Activated naive CD4-positive, alpha-beta T cell treated with anti-CD3 and anti-CD28 coated beads for 36 hours (primary cell): ENCODE measurements at regions of chr1 and their contacts with region 1.

Region 1: GRCh38 chr1:194150242-194150641 is 963.8 kb upstream of the B3GALT2 start:
- DNase-seq: no peak
- H3K4me3 Mint-ChIP-seq: no peak overlapping the region
- H3K27ac Mint-ChIP-seq: no peak overlapping the region
- H3K4me1 Mint-ChIP-seq: peaks cover 13% of the 10 kb centered on the region
- H3K27me3 Mint-ChIP-seq: no peaks in the 10 kb centered on the region

Region 2: GRCh38 chr1:193927550-193927949 is 222.7 kb before region 1 on chr1:
- CTCF ChIA-PET with region 1: no interaction called
- intact Hi-C with region 1: no loop called
- DNase-seq: no peak
- H3K4me3 Mint-ChIP-seq: no peak overlapping the region
- H3K27ac Mint-ChIP-seq: no peak overlapping the region
- H3K4me1 Mint-ChIP-seq: no peaks in the 10 kb centered on the region
- H3K27me3 Mint-ChIP-seq: no peaks in the 10 kb centered on the region

Region 3: GRCh38 chr1:194133163-194133562 is 17.1 kb before region 1 on chr1:
- CTCF ChIA-PET with region 1: no interaction called
- intact Hi-C with region 1: loop called (anchors 1 kb)
- DNase-seq: no peak
- H3K4me3 Mint-ChIP-seq: no peak overlapping the region
- H3K27ac Mint-ChIP-seq: no peak overlapping the region
- H3K4me1 Mint-ChIP-seq: peaks cover 12% of the 10 kb centered on the region
- H3K27me3 Mint-ChIP-seq: no peaks in the 10 kb centered on the region

Region 4: GRCh38 chr1:194175251-194175650 is 25.0 kb after region 1 on chr1:
- CTCF ChIA-PET with region 1: no interaction called
- intact Hi-C with region 1: no loop called
- DNase-seq: no peak
- H3K4me3 Mint-ChIP-seq: no peak overlapping the region
- H3K27ac Mint-ChIP-seq: no peak overlapping the region
- H3K4me1 Mint-ChIP-seq: no peaks in the 10 kb centered on the region
- H3K27me3 Mint-ChIP-seq: no peaks in the 10 kb centered on the region